CD8-positive, alpha-beta T cell (primary cell): ENCODE measurements at regions of chr20 and their contacts with region 1.

Region 1: DNA sequence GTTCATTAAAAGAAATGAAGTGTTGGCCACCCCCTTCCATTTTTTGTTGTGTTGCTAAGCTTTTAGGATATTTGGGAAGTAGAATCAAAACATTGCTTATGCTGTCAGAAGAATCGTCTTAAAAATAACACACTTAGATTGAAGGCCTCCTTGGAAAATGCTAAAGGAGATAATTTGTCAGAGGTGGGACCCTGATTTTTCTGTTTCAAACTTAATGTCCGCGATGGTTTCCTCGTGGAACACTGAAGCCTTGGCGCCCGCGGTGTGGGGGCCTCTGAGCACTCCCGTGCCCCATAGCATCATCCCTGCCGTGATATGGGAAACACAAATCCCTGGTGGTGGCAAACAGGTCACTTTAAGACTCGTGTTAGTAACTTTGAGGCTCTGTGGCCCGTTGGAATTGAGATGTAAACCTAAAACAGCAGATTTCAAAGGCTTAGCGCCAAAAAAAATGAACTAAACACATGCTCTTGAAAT is 9.1 kb upstream of the RBM38 start:
- DNase-seq: no peak
- ATAC-seq: no peak
- H3K4me3 ChIP-seq: no peak overlapping the region
- H3K4me3 Mint-ChIP-seq: no peak overlapping the region
- H3K27ac ChIP-seq: no peak overlapping the region
- H3K27ac Mint-ChIP-seq: peak overlapping the region; percentile 66
- H3K4me1 ChIP-seq: peaks cover 12% of the 10 kb centered on the region
- H3K4me1 Mint-ChIP-seq: peaks cover 22% of the 10 kb centered on the region
- H3K27me3 ChIP-seq: no peaks in the 10 kb centered on the region
- H3K27me3 Mint-ChIP-seq: no peaks in the 10 kb centered on the region
- CTCF ChIP-seq: no peak

Region 2: DNA sequence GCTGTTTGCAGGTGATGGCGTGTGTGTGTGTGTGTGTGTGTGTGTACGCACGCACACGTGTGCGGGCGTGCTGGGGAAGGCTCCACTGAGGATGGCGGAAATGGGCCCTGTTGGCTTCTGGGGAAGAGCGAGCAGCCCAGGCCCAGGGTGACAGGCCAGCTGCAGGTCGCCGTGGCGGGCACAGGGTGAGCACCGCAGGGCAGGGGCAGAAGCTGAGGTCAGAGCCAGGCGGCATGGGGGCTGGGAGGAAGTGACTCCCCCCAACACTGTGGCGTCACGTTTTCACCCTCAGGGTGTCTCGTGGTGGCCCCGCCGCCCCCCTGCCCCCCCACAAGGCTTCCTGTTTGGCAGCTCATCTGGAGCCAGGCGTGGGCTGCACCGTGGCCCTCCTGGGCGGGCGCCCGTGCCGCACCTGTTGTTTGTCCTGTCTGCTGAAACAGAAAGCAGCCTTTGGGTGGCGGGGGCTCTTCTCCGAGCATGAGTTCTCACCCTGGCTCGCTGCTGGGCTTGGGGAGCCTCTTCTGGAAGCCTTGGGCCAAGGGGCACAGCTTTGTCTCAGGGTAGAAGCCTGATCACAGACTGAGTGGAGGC is 16.3 kb after region 1 on chr20:
- CTCF ChIA-PET with region 1: interaction called, 22 read pairs
- POLR2A ChIA-PET with region 1: interaction called, 7 read pairs
- intact Hi-C with region 1: loop called in 1 of 2 experiments (anchors 1 kb)
- DNase-seq: peak; percentile 88 to 98 (median 96)
- ATAC-seq: peak; percentile 69
- H3K4me3 ChIP-seq: peak overlapping the region; percentile 40 to 63
- H3K4me3 Mint-ChIP-seq: peak overlapping the region; percentile 76
- H3K27ac ChIP-seq: peak overlapping the region; percentile 78 to 90
- H3K27ac Mint-ChIP-seq: peak overlapping the region; percentile 97
- H3K4me1 ChIP-seq: peaks cover 96% of the 10 kb centered on the region
- H3K4me1 Mint-ChIP-seq: peaks cover 93% of the 10 kb centered on the region
- H3K27me3 ChIP-seq: no peaks in the 10 kb centered on the region
- H3K27me3 Mint-ChIP-seq: no peaks in the 10 kb centered on the region
- CTCF ChIP-seq: no peak

Region 3: DNA sequence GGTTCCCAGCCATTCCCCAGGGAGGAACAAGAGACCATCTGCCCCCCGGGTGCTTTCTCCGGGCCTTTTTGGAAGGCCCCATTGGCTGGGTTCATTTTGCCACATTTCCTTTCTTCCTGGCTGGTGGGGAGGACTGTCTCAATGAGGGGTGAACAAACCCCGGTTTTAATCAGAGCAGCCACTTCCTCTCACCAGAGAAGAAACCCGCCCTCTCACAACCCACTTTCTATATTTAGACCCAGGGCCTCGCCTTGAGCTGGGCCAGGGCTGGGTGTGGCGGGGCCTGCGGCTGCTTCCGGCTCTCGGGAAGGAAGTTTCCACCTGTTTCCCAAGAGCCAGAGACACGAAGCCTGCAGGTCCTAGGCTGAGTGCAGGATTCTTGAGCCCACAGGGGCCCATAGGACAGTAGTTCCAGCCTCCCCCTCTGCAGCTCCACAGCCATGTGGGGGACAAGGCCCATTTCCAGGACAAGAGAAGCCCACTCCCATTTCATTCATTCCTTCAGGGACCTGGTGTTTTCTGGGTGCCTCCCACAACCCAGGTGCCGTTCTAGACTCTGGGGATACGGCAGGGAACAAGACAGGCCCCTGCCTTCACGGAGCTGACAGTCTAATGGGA is 50.9 kb after region 1 on chr20:
- CTCF ChIA-PET with region 1: interaction called, 58 read pairs
- POLR2A ChIA-PET with region 1: no interaction called
- intact Hi-C with region 1: loop called (anchors 1 to 2 kb)
- DNase-seq: peak; percentile 27 to 87 (median 69)
- ATAC-seq: peak; percentile 86
- H3K4me3 ChIP-seq: peak overlapping the region; percentile 7 to 38
- H3K4me3 Mint-ChIP-seq: peak overlapping the region; percentile 52
- H3K27ac ChIP-seq: peak overlapping the region; percentile 2 to 68
- H3K27ac Mint-ChIP-seq: peak overlapping the region; percentile 67
- H3K4me1 ChIP-seq: peaks cover 55% of the 10 kb centered on the region
- H3K4me1 Mint-ChIP-seq: peaks cover 64% of the 10 kb centered on the region
- H3K27me3 ChIP-seq: no peaks in the 10 kb centered on the region
- H3K27me3 Mint-ChIP-seq: no peaks in the 10 kb centered on the region
- CTCF ChIP-seq: no peak

Region 4: GRCh38 chr20:57473246-57474048 is 91.4 kb after region 1 on chr20:
- CTCF ChIA-PET with region 1: interaction called, 12 read pairs
- POLR2A ChIA-PET with region 1: no interaction called
- intact Hi-C with region 1: no loop called
- DNase-seq: peak in 4 of 9 experiments; percentile 11 to 63 (median 26)
- ATAC-seq: peak; percentile 64
- H3K4me3 ChIP-seq: no peak overlapping the region
- H3K4me3 Mint-ChIP-seq: no peak overlapping the region
- H3K27ac ChIP-seq: no peak overlapping the region
- H3K27ac Mint-ChIP-seq: peak overlapping the region; percentile 37
- H3K4me1 ChIP-seq: peaks cover 30% of the 10 kb centered on the region
- H3K4me1 Mint-ChIP-seq: peaks cover 31% of the 10 kb centered on the region
- H3K27me3 ChIP-seq: no peaks in the 10 kb centered on the region
- H3K27me3 Mint-ChIP-seq: no peaks in the 10 kb centered on the region
- CTCF ChIP-seq: no peak

Region 5: GRCh38 chr20:57498425-57499400 is 116.6 kb after region 1 on chr20:
- CTCF ChIA-PET with region 1: interaction called, 30 read pairs
- POLR2A ChIA-PET with region 1: interaction called, 3 read pairs
- intact Hi-C with region 1: loop called (anchors 1 kb)
- DNase-seq: peak in 5 of 9 experiments; percentile 34 to 61 (median 42)
- ATAC-seq: peak; percentile 74
- H3K4me3 ChIP-seq: no peak overlapping the region
- H3K4me3 Mint-ChIP-seq: no peak overlapping the region
- H3K27ac ChIP-seq: no peak overlapping the region
- H3K27ac Mint-ChIP-seq: no peak overlapping the region
- H3K4me1 ChIP-seq: peaks cover 6% of the 10 kb centered on the region
- H3K4me1 Mint-ChIP-seq: peaks cover 13% of the 10 kb centered on the region
- H3K27me3 ChIP-seq: peaks cover 0 to 4% of the 10 kb centered on the region in 2 experiments
- H3K27me3 Mint-ChIP-seq: peaks cover 32% of the 10 kb centered on the region
- CTCF ChIP-seq: peak; percentile 48

Region 6: DNA sequence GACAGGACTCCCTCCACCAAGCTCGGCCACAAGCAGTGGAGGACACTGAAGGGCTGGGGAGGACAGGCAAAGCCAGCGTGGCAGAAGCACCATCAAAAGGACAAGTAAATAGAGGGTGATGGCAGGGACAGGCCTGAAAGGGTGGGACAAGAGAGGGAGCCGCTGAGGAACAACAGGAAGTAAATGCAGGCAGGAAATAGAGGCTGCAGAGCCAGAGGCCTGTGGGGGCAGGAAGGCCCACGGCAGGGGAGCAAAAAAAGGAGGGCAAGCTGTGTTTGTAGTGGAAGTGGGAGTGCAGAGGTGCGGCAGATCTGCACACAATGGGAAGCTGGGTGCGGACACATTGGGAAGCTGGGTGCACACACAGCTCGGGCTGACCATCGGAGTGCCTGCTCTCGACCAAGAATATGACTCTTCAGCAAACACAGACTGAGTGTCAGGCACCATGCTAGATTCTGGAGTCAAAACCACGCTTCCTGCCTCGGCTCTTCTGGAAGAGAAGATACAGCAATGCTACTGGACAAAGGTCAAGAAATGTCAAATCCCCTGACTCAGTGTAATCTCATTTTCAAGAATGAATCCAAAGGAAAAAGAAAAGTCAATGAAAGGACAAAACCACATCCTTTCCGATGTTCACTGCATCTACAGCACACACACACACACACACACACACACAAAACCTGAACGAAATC is 887.0 kb after region 1 on chr20:
- CTCF ChIA-PET with region 1: no interaction called
- POLR2A ChIA-PET with region 1: no interaction called
- intact Hi-C with region 1: no loop called
- DNase-seq: no peak
- ATAC-seq: no peak
- H3K4me3 ChIP-seq: no peak overlapping the region
- H3K4me3 Mint-ChIP-seq: peak overlapping the region; percentile 4
- H3K27ac ChIP-seq: no peak overlapping the region
- H3K27ac Mint-ChIP-seq: no peak overlapping the region
- H3K4me1 ChIP-seq: peaks cover 13% of the 10 kb centered on the region
- H3K4me1 Mint-ChIP-seq: peaks cover 31% of the 10 kb centered on the region
- H3K27me3 ChIP-seq: no peaks in the 10 kb centered on the region
- H3K27me3 Mint-ChIP-seq: no peaks in the 10 kb centered on the region
- CTCF ChIP-seq: no peak